ENCODE measurements at regions of chr3 and their contacts with region 1.

Region 1: GRCh38 chr3:187738331-187739093 is 6.8 kb downstream of the BCL6 start:
- DNase-seq: peak; percentile 87
- H3K4me3 ChIP-seq: peak overlapping the region; percentile 68 to 83
- H3K27ac ChIP-seq: peak overlapping the region; percentile 96 to 97
- H3K4me1 ChIP-seq: peaks cover 3% of the 10 kb centered on the region
- H3K27me3 ChIP-seq: no peaks in the 10 kb centered on the region
- CTCF ChIP-seq: peak; percentile 48 to 85 (median 66)
- POLR2A ChIP-seq: no peak

Region 2: DNA sequence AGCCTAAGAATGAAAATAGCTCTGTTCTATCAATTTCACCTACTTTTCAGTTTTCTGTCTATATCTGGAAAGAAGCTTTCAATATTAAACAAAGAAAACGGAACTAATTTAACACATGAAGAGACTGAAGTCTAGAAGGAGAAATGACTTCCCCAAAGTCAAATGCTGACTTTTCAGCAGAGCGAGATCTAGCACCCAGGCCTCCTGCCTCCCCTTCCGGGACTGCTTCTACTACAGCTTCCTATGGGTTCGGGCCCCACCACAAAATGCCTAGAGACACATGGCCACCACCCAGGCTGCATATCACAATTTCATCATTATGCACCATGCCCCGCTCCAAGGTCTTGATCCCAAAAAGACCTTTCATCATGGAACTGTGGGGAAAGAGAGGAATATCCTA is 172.8 kb before region 1 on chr3:
- intact Hi-C with region 1: no loop called
- DNase-seq: no peak
- H3K4me3 ChIP-seq: no peak overlapping the region
- H3K27ac ChIP-seq: no peak overlapping the region
- H3K4me1 ChIP-seq: no peaks in the 10 kb centered on the region
- H3K27me3 ChIP-seq: no peaks in the 10 kb centered on the region
- CTCF ChIP-seq: no peak
- POLR2A ChIP-seq: no peak

Region 3: DNA sequence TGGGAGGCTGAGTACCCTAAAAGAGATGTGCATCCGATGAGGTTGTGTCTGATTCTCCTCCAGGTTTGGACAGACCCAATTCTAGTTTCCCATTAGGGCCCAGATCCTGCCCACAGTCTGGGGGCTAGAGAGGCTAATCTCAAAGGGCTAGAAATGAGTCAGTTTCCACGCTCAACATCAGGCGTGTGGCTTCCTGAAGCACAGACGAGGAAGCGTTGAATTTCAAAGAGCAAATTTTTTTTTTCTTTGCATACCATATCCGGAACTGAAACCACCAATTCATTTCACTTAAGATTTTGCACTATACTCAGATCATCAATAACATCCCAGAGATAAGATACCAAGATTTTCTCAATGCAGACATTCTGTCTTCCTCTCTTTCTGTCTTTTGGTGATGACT is 180.5 kb after region 1 on chr3:
- intact Hi-C with region 1: loop called (anchors 5 kb)
- DNase-seq: no peak
- H3K4me3 ChIP-seq: no peak overlapping the region
- H3K27ac ChIP-seq: no peak overlapping the region
- H3K4me1 ChIP-seq: no peaks in the 10 kb centered on the region
- H3K27me3 ChIP-seq: no peaks in the 10 kb centered on the region
- CTCF ChIP-seq: no peak
- POLR2A ChIP-seq: no peak

Region 4: GRCh38 chr3:188123170-188123905 is 384.8 kb after region 1 on chr3:
- intact Hi-C with region 1: no loop called
- DNase-seq: no peak
- H3K4me3 ChIP-seq: no peak overlapping the region
- H3K27ac ChIP-seq: no peak overlapping the region
- H3K4me1 ChIP-seq: no peaks in the 10 kb centered on the region
- H3K27me3 ChIP-seq: no peaks in the 10 kb centered on the region
- CTCF ChIP-seq: no peak
- POLR2A ChIP-seq: no peak

Region 5: DNA sequence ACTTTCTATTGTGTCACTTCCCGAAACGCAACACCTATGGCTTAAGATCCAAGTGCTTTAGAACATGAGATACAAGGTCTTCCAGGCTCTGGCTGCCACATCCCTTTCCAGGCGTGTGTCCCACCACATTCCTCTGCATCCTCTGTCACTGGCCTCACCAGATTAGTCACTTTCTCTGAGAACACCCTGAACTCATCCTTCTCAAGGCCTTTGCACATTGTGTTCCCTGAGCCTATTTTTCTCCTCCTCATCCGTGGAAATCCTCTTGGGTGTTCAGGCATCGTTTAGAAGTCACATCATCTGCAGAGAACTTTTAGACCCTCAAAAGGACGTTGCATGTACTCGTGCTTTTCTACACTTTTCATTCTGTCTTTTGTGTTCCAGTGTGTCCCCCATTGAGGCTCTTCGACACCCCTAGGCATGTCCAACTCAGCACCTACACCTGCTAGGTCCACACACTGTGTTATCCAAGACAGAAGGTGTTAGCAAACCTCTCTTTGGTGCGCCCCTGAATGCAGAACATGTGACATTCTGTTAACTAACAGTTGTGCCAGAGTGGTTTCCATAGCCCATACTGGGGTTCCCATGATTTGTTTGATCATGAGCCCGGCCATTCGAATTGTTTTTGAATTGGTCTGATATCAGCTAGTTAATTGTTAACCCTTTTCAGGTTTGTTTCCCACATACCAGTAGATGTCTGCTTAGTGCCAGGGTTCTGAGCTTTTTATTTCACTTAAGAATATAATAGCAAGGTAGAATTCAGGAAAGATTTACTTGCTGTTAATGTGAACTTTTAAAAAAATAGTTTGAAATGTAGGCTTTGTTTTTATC is 482.7 kb after region 1 on chr3:
- intact Hi-C with region 1: loop called (anchors 5 kb)
- DNase-seq: no peak
- H3K4me3 ChIP-seq: no peak overlapping the region
- H3K27ac ChIP-seq: peak overlapping the region; percentile 67 to 80
- H3K4me1 ChIP-seq: no peaks in the 10 kb centered on the region
- H3K27me3 ChIP-seq: no peaks in the 10 kb centered on the region
- CTCF ChIP-seq: no peak
- POLR2A ChIP-seq: no peak

Region 6: DNA sequence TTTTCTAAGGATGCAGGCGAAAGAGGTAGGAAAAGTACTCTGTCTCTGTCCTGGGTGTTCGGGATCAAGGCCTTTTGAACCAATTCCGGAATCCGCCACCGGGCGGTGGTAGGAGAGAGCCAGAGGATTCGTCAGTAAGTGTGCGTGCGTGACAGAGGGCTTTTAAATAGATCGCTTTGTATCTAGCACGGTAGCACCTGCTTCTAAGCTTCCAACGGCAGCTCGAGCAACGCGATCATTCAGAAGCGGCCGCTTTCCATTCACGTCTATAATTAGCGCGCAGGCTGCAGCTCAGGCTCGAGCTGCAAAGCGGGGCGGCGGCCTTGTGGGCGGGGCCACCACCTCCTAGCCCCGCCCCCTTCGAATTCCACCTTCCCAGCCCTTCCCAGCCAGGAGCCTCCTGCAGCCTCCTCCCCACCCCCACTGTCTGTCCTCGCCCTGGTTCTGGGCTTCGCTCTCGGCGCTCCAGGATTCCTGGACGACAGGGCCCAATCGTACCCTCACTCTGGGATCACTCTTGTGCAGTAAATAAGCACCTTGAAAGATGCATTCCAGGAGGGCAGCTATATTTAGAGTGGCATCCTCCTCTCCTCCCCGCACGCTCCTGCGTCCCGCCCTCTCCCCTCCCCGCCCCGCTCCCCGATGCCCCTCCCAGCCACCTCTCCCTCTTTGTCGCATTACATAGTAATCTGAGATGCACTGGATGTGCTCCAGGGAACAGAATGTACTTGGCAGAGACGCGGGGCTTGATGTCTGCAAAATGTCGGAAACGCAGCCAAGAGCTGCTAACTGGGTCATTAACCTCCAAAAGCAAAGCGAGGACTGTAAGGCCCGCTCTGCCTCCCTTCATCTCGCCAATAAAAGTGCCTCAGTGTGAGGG is 1209.1 kb after region 1 on chr3:
- intact Hi-C with region 1: loop called (anchors 2 kb)
- DNase-seq: peak; percentile 99
- H3K4me3 ChIP-seq: peak overlapping the region; percentile 24 to 30
- H3K27ac ChIP-seq: peak overlapping the region; percentile 90
- H3K4me1 ChIP-seq: peaks cover 9% of the 10 kb centered on the region
- H3K27me3 ChIP-seq: no peaks in the 10 kb centered on the region
- CTCF ChIP-seq: peak in 2 of 4 experiments; percentile 52 to 61
- POLR2A ChIP-seq: peak; percentile 45

Region 7: GRCh38 chr3:189148081-189148507 is 1409.6 kb after region 1 on chr3:
- intact Hi-C with region 1: loop called (anchors 5 kb)
- DNase-seq: peak; percentile 49
- H3K4me3 ChIP-seq: no peak overlapping the region
- H3K27ac ChIP-seq: no peak overlapping the region
- H3K4me1 ChIP-seq: no peaks in the 10 kb centered on the region
- H3K27me3 ChIP-seq: no peaks in the 10 kb centered on the region
- CTCF ChIP-seq: peak; percentile 66 to 88 (median 88)
- POLR2A ChIP-seq: no peak